Posterior vena cava (tissue), 2 donors: ENCODE measurements at regions of chr18 and their contacts with region 1.

Region 1: GRCh38 chr18:49006641-49007454 is 56.1 kb upstream of the SMAD7 start:
- DNase-seq: no peak

Region 2: GRCh38 chr18:49048396-49049020 is 41.7 kb after region 1 on chr18:
- intact Hi-C with region 1: loop called in 1 of 2 experiments (anchors 1 kb)
- DNase-seq: no peak